ENCODE measurements at regions of chr17 and their contacts with region 1.

Region 1: DNA sequence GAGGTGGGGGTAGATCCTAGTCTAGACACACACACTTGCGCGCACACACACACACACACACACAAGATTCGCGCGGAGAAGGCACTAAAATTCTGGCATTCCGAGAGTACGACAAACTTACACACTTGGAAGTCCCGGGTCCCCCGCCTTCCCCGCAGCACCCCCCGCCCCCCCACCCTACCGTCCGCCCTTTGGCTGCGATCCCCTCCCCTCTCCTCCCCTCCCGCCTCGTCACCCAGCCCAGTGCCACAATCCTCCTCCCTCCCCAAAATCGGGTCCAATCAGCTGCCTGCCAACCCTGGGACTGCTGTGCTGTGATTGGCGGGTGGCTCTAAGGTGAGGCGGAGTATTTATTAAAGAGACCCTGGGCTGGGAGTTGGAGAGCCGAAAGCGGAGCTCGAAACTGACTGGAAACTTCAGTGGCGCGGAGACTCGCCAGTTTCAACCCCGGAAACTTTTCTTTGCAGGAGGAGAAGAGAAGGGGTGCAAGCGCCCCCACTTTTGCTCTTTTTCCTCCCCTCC is at the start of gene SOX9:
- DNase-seq: peak; percentile 96
- ATAC-seq: peak; percentile 77
- H3K4me3 ChIP-seq: peak within 1 kb of the TSS; percentile 95
- H3K27ac ChIP-seq: peak within 1 kb of the TSS; percentile 96
- H3K4me1 ChIP-seq: peaks cover 16% of the 10 kb centered on the region
- H3K27me3 ChIP-seq: peaks cover 11% of the 10 kb centered on the region; the same call in 1 of the 2 replicates
- CTCF ChIP-seq: no peak
- POLR2A ChIP-seq: peak; percentile 98
- RAD21 ChIP-seq: peak; percentile 9; the same call in 1 of the 2 replicates
- total RNA-seq, gene SOX9: 4.1 and 8.3 TPM in 2 replicates

Region 2: DNA sequence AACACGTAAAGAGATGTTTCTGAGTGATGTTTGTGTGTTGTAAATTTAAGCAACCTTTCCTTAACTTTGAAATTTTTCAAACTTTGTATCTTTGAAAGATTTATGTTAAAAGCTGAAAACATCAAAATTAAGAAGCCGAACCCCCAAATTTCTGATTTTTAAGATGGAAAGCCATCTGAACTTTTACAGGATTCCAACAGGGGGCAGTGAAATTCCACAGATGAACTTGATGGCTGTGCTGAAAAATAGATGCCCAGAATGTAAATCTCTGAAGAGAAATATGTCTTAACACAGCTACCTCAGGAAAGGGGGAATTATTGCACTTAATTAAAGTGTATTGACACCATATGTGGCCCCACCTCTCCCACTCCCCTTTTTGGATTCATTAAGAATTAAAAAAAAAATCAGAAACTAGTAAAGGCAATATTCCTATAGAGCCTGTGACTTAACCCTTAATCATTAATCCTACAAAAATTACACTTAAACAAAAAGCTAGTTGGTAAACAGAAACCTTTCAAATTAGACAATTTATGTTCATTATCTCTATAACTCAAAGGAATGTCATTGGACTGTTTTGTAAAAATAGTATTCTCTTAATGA is 1353.5 kb before region 1 on chr17:
- CTCF ChIA-PET with region 1: interaction called, 6 read pairs
- POLR2A ChIA-PET with region 1: no interaction called
- dilution Hi-C with region 1: no loop called
- in situ Hi-C with region 1: loop called (anchors 10 kb)
- intact Hi-C with region 1: loop called (anchors 1 kb)
- DNase-seq: peak; percentile 59
- ATAC-seq: peak; percentile 51; the same call in 1 of the 2 replicates
- H3K4me3 ChIP-seq: no peak overlapping the region
- H3K27ac ChIP-seq: no peak overlapping the region
- H3K4me1 ChIP-seq: no peaks in the 10 kb centered on the region
- H3K27me3 ChIP-seq: no peaks in the 10 kb centered on the region
- CTCF ChIP-seq: peak; percentile 78
- POLR2A ChIP-seq: no peak
- RAD21 ChIP-seq: peak; percentile 86

Region 3: DNA sequence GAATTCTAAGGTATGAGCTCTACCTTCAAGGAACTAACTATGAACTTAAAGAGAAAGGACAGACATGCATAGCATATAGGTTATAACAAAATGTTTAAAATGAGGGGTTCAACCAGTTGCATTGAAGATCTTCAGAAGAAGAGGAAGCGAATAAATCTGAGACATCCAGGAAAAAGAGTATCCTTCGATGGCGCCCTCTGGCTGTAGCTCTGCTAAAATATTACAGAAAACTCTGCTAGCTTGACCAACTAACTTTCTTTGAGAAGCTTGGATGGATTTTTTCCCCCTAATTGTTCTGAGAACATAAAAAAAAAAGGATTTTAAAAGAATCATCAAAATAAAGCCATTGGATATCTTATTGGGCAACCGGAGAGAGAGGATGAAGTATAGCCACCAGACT is 659.8 kb before region 1 on chr17:
- CTCF ChIA-PET with region 1: interaction called, 3 read pairs
- POLR2A ChIA-PET with region 1: no interaction called
- dilution Hi-C with region 1: no loop called
- in situ Hi-C with region 1: loop called (anchors 10 kb)
- intact Hi-C with region 1: no loop called
- DNase-seq: peak; percentile 43
- ATAC-seq: no peak
- H3K4me3 ChIP-seq: no peak overlapping the region
- H3K27ac ChIP-seq: no peak overlapping the region
- H3K4me1 ChIP-seq: no peaks in the 10 kb centered on the region
- H3K27me3 ChIP-seq: no peaks in the 10 kb centered on the region
- CTCF ChIP-seq: peak; percentile 53
- POLR2A ChIP-seq: no peak
- RAD21 ChIP-seq: peak; percentile 63

Region 4: GRCh38 chr17:71910002-71910401 is 210.7 kb before region 1 on chr17:
- CTCF ChIA-PET with region 1: no interaction called
- POLR2A ChIA-PET with region 1: interaction called, 10 read pairs
- dilution Hi-C with region 1: no loop called
- in situ Hi-C with region 1: no loop called
- intact Hi-C with region 1: no loop called
- DNase-seq: no peak
- ATAC-seq: no peak
- H3K4me3 ChIP-seq: no peak overlapping the region
- H3K27ac ChIP-seq: no peak overlapping the region
- H3K4me1 ChIP-seq: no peaks in the 10 kb centered on the region
- H3K27me3 ChIP-seq: no peaks in the 10 kb centered on the region
- CTCF ChIP-seq: no peak
- POLR2A ChIP-seq: no peak
- RAD21 ChIP-seq: no peak

Region 5: DNA sequence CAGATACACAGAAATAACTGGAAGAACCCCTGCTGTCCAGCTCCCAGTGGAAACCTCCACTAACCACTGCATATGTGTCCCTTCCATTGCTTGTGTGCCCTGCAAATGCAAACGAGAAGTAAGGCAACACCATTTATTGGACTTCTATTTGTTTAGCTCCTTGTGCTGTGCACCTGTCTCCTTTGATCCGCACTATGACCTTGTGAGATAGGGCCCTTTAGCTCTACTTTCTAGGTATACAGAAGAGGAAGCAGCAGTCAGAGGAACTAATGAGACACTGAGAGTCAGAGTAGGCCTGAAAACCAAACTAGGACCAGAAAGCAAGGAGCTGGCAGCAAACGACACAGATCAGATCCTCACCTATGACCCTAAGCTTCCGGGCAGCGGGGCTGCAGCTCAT is 22.5 kb after region 1 on chr17:
- CTCF ChIA-PET with region 1: no interaction called
- POLR2A ChIA-PET with region 1: no interaction called
- dilution Hi-C with region 1: no loop called
- in situ Hi-C with region 1: no loop called
- intact Hi-C with region 1: no loop called
- DNase-seq: no peak
- ATAC-seq: no peak
- H3K4me3 ChIP-seq: no peak overlapping the region
- H3K27ac ChIP-seq: no peak overlapping the region
- H3K4me1 ChIP-seq: peaks cover 3% of the 10 kb centered on the region
- H3K27me3 ChIP-seq: no peaks in the 10 kb centered on the region; the same call in 1 of the 2 replicates
- CTCF ChIP-seq: no peak
- POLR2A ChIP-seq: no peak
- RAD21 ChIP-seq: no peak

Region 6: DNA sequence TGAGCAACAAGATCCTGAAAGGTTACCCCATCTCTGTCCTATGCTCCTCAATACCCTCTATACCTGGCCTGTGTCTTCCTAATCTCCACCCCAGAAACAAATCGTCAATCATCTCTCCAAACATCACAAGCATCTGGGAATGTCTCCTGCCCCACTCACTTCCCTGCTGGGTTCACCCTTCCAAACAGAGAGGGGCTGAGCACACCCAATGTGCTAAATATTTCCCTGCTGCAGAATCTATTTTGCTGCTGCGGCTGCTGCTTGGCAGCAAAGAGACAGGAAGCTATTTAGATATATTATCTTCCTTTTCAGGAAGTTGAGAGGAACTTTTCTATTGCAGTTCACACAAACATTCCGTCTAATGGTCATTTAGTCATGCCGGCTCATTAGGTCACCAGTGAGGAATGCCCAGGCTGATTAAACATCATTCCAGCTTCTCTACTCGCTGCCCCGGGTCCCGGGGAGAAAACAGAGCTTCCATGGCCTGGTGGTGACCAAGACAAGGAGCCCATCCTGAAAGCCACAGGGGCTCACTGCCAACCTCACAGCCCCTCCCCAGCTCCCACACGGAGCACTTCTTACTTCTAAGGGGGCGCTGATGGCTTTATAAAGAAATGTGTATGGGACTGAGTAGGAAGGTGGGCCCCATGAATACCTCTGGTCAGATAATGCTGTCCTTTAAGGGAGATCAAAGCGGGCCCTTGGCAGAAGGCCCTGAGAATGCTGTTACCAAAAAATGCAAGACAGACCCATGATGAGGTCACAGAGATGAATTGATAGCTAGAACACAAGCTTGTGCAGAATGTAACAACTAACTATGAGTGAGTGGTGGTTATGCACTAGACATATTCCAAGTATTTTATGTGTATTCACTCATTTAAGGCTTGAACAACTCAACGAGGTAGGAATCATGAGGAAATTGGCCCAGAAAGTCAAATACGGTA is 218.4 kb after region 1 on chr17:
- CTCF ChIA-PET with region 1: interaction called, 4 read pairs
- POLR2A ChIA-PET with region 1: no interaction called
- dilution Hi-C with region 1: no loop called
- in situ Hi-C with region 1: no loop called
- intact Hi-C with region 1: loop called (anchors 1 kb)
- DNase-seq: peak; percentile 97
- ATAC-seq: peak; percentile 89
- H3K4me3 ChIP-seq: no peak overlapping the region
- H3K27ac ChIP-seq: peak overlapping the region; percentile 86
- H3K4me1 ChIP-seq: peaks cover 23% of the 10 kb centered on the region
- H3K27me3 ChIP-seq: no peaks in the 10 kb centered on the region
- CTCF ChIP-seq: no peak
- POLR2A ChIP-seq: peak; percentile 53; the same call in 1 of the 2 replicates
- RAD21 ChIP-seq: peak; percentile 23; the same call in 1 of the 2 replicates

Region 7: DNA sequence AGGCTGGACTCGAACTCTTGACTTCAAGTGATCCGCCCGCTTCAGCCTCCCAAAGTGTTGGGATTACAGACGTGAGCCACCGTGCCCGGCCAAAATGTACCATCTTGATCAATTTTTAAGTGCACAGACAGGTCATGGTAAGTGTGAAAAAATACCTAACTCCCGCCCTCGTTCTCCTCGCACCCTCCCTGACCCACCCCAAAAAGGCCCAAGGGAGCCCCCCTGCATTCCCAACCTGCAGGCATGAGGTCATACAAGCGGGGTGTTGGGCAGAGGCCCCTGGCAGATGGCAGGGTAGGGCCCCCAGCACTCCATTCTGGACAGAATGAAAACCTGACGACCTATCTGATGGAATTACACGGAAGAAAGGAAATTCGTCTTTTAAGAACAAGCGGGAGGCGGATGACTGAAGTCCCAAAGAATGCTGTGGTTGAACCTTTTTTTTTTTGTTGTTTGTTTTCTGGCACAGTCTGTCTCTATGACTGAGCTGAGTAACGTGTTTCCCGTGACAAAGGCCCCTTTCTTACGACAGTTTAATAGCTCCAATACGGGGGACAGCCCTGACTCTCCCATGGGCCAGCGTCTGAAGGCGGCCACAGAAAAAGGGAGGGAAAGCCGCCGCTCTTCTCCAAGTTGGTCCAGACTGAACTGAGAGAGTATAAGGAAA is 595.3 kb after region 1 on chr17:
- CTCF ChIA-PET with region 1: no interaction called
- POLR2A ChIA-PET with region 1: no interaction called
- dilution Hi-C with region 1: no loop called
- in situ Hi-C with region 1: no loop called
- intact Hi-C with region 1: no loop called
- DNase-seq: peak; percentile 98
- ATAC-seq: peak; percentile 87
- H3K4me3 ChIP-seq: no peak overlapping the region
- H3K27ac ChIP-seq: peak overlapping the region; percentile 60
- H3K4me1 ChIP-seq: peaks cover 3% of the 10 kb centered on the region; the same call in 1 of the 2 replicates
- H3K27me3 ChIP-seq: no peaks in the 10 kb centered on the region
- CTCF ChIP-seq: no peak
- POLR2A ChIP-seq: peak; percentile 71
- RAD21 ChIP-seq: peak; percentile 16

Measured in IMR-90 (cell line).